H1 (cell line): ENCODE measurements at regions of chr1 and their contacts with region 1.

Region 1: GRCh38 chr1:29703596-29704370 is 467.5 kb downstream of the PTPRU start:
- DNase-seq: peak in 1 of 2 experiments; percentile 61
- H3K4me3 ChIP-seq: no peak overlapping the region
- H3K27ac ChIP-seq: no peak overlapping the region
- H3K4me1 ChIP-seq: peaks cover 0 to 1% (median under 1%) of the 10 kb centered on the region in 4 experiments; a peak in 3 of 7 replicates
- H3K27me3 ChIP-seq: no peaks in the 10 kb centered on the region
- CTCF ChIP-seq: peak; percentile 71 to 88 (median 78)
- EP300 ChIP-seq: no peak
- POLR2A ChIP-seq: no peak
- RAD21 ChIP-seq: peak; percentile 62 to 68

Region 2: DNA sequence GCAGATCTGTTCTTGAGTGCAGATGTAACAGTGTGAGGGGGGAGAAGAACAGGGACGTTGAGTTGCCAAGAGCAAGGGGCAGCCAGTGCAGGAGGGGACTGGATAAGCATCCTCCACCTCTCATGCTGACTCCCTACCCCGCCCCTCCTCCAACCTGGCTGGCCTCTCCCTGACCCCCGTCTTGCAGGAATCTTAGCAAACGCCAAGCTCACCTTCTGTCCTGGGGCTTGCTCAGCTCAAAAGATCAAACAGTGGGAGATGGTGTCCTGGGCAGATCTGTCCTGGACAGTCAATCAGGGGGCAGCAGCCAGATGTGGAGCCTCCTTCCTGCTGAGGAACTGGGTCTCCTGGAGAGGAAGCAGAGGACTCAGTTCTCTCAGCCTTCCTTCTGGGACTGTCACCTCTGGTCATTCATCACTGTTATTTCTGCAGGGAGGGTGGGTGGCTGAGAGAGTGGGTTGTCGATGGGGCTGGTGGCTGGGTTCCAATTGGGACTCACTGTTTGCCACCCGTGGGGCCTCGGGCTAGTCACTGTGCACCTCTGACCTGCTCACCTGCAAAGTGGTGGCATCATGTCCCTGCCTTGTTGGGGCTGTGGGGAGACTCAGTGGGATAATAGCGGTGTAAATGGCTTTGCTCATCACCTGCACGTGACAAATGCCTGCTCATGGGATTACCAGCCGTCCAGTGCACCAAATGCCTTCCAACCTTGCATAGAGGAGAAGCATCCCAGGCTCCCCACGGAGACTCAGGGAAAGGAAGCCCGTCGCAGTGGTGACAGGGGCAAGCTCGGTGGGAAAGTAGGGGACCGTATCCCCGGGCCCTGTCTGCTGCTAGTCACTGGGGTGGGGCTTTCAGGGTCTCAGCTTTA is 313.1 kb before region 1 on chr1:
- CTCF ChIA-PET with region 1: interaction called, 10 read pairs
- POLR2A ChIA-PET with region 1: no interaction called
- DNase-seq: peak in 1 of 2 experiments; percentile 38
- H3K4me3 ChIP-seq: no peak overlapping the region
- H3K27ac ChIP-seq: no peak overlapping the region
- H3K4me1 ChIP-seq: no peaks in the 10 kb centered on the region
- H3K27me3 ChIP-seq: no peaks in the 10 kb centered on the region
- CTCF ChIP-seq: no peak
- EP300 ChIP-seq: no peak
- POLR2A ChIP-seq: no peak
- RAD21 ChIP-seq: no peak

Region 3: DNA sequence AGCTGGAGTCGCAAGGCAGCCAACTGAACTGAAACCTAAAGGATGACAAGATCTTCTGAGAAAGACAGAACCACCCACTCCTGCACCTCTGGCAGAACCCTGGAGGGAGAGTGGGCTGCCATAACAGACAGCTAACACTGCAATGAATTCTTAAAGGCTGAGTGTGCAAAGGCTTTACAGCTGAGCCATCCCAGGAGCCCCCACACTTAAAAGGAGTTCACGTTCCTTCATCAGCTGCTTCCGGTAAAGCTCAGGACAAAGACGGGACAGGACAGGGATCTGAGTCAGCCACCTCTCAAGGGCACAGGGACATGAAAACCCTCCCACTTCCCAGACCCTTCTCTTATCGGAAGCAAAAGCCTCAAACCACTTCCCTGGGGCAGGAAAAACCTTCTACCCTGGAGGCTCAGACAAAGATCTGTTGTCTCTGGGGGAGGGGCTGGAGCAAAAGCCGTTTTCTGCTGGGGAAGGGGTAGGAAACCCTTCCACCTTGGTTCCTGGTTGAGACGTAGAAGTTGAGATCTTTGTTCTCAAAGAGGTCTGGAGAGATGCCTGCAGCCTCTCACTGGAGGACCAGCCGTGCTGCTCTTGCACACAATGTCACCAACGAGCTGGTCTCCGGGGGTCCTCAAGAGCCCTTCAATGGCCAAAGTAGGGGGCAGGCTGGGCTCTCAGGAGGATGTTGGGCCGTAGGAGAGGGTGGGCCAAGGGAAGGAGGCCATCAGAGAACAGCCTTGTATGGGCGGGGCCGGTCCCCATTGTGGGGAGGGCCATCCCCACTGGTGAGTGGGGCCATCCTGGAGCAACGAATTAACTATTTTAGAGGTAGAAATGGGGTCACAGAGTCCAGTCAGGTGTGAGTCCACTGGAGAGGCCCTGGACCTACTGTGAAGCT is 15.1 kb before region 1 on chr1:
- CTCF ChIA-PET with region 1: interaction called, 163 read pairs
- POLR2A ChIA-PET with region 1: no interaction called
- DNase-seq: no peak
- H3K4me3 ChIP-seq: no peak overlapping the region
- H3K27ac ChIP-seq: no peak overlapping the region
- H3K4me1 ChIP-seq: 0 out of 7 replicates have a peak, but pooled peaks cover 0 to 2% (median 0%) of the 10 kb centered on the region in 4 experiments
- H3K27me3 ChIP-seq: 0 out of 7 replicates have a peak, but pooled peaks cover 0 to 4% (median 0%) of the 10 kb centered on the region in 4 experiments
- CTCF ChIP-seq: no peak
- EP300 ChIP-seq: no peak
- POLR2A ChIP-seq: no peak
- RAD21 ChIP-seq: no peak

Region 4: DNA sequence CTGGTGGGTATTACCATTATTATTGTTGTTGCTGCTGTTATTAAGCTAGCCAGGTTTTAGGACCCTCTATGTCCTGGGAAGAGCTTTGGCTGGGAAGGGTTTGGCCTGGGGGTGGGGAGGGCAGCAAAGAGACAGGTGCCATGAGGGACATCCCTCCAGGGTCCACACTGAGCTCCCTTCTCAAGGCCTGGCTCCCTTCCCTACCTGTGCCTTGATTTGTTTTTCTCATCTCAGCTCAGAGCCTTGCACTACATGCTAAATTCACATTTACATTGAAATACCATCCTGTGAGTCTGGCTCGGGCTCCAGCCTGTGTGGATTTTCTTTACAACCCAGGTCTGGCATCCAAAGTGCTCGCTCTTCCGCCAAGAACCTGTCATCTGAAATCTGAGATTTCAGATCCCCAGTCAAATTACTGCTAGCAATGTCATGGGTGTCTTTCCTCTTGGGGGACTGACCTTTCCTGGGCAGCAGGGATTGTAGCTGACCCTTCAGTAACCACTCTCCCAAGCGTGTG is 68.9 kb after region 1 on chr1:
- CTCF ChIA-PET with region 1: no interaction called
- POLR2A ChIA-PET with region 1: no interaction called
- DNase-seq: no peak
- H3K4me3 ChIP-seq: no peak overlapping the region
- H3K27ac ChIP-seq: no peak overlapping the region
- H3K4me1 ChIP-seq: no peaks in the 10 kb centered on the region
- H3K27me3 ChIP-seq: peaks cover 0 to 1% (median 0%) of the 10 kb centered on the region in 4 experiments; a peak in 2 of 7 replicates
- CTCF ChIP-seq: no peak
- EP300 ChIP-seq: no peak
- POLR2A ChIP-seq: no peak
- RAD21 ChIP-seq: no peak

Region 5: DNA sequence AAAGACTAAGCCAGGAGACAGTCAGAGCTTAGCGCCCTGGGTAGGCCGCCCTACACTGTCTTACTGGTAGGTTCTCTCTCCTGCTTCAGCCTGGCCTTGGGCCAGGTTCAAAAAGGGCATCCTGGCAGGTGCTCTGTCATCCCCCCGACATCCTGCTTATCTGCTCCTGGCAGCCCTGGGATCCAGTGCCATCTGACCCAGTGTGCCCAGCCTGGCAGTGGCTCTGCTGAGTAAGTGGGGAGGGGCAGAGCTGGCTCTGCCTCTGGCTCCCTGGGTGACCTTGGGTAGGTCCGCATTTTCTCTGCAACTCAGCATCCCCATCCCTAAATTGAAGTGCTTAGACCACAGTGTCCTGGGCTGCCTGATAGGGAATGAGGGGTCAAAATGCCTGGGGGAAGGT is 82.4 kb after region 1 on chr1:
- CTCF ChIA-PET with region 1: interaction called, 13 read pairs
- POLR2A ChIA-PET with region 1: interaction called, 3 read pairs
- DNase-seq: no peak
- H3K4me3 ChIP-seq: no peak overlapping the region
- H3K27ac ChIP-seq: no peak overlapping the region
- H3K4me1 ChIP-seq: no peaks in the 10 kb centered on the region
- H3K27me3 ChIP-seq: no peaks in the 10 kb centered on the region
- CTCF ChIP-seq: no peak
- EP300 ChIP-seq: no peak
- POLR2A ChIP-seq: no peak
- RAD21 ChIP-seq: no peak

Region 6: DNA sequence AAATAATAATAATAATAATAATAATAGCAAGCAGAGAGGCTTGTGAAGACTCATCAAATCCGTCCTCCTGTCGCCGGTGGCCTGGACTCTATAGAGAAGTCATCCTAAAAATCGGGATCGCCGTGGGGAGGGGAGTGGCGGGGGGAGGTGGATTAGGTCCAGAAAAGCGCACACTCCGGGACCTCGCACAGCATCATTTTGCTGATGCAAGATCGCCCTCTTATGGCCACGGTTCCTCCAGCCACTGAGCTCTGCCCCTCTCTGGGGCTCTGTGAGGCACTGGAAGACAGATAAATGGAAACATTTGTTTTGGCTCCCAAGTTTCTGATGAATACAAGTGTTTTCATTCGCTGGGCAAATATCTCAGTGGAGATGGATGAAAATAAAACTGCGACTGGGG is 407.6 kb after region 1 on chr1:
- CTCF ChIA-PET with region 1: interaction called, 12 read pairs
- POLR2A ChIA-PET with region 1: no interaction called
- DNase-seq: peak; percentile 34 to 77
- H3K4me3 ChIP-seq: peak overlapping the region in 1 of 4 experiments; percentile 33; a peak in 1 of 8 replicates
- H3K27ac ChIP-seq: no peak overlapping the region
- H3K4me1 ChIP-seq: no peaks in the 10 kb centered on the region
- H3K27me3 ChIP-seq: no peaks in the 10 kb centered on the region
- CTCF ChIP-seq: peak; percentile 79 to 85 (median 80)
- EP300 ChIP-seq: no peak
- POLR2A ChIP-seq: no peak
- RAD21 ChIP-seq: peak; percentile 88